ENCODE measurements at regions of chr1 and their contacts with region 1.

Region 1: DNA sequence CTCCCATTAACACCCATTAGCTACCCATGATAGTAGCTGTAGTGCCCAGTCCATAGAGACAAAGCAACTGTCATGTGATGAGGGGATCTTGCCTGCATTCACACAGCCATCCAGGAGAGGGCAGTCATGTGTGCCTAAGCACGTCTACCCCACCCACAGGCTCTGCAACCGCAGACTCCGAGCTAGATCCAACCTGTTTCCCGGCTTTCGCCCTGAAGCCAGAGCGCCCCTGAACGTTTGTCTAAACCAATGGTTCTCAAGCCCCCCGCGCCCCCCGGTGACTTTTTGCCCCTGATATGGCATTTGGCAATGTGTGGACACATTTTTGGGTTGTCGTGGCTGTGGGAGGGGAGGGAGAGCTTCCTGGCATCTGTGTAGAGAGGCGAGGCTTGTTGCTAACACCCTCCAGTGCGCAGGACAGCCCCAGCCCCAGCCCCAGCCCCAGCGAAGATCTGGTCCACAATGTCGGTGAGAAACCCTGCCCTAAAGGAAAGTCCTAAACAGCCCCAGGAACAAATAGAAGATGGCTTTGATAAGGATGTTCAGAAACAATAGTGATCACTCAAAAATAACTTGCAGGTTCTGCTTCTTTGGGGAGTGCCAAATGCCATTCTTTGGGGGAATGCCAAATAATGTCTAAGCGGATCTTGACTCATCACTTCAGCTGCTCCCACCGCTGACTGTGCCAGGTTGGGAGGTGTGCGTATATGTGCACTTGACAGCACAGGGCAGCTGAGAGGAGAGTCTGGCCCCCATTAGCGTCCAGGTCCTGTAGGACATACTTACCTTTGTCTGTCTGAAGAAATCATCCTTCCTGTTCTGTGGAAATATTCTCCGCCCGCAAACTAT is 34.5 kb downstream of the SLC44A3 start:
- DNase-seq: peak; percentile 86 to 99
- H3K4me3 ChIP-seq: peak overlapping the region; percentile 38; the same call in 1 of the 2 replicates
- H3K27ac ChIP-seq: peak overlapping the region; percentile 83
- H3K4me1 ChIP-seq: peaks cover 65% of the 10 kb centered on the region
- H3K27me3 ChIP-seq: no peaks in the 10 kb centered on the region
- CTCF ChIP-seq: peak; percentile 99

Region 2: GRCh38 chr1:94522304-94522703 is 332.4 kb before region 1 on chr1:
- CTCF ChIA-PET with region 1: no interaction called
- POLR2A ChIA-PET with region 1: no interaction called
- intact Hi-C with region 1: loop called (anchors 5 kb)
- DNase-seq: no peak
- H3K4me3 ChIP-seq: no peak overlapping the region
- H3K27ac ChIP-seq: no peak overlapping the region
- H3K4me1 ChIP-seq: peaks cover 12% of the 10 kb centered on the region
- H3K27me3 ChIP-seq: no peaks in the 10 kb centered on the region
- CTCF ChIP-seq: peak; percentile 63

Region 3: GRCh38 chr1:94807742-94808491 is 46.8 kb before region 1 on chr1:
- CTCF ChIA-PET with region 1: no interaction called
- POLR2A ChIA-PET with region 1: no interaction called
- intact Hi-C with region 1: loop called (anchors 2 kb)
- DNase-seq: peak; percentile 70 to 89
- H3K4me3 ChIP-seq: no peak overlapping the region
- H3K27ac ChIP-seq: 0 out of 2 replicates have a peak overlapping the region, but pooled peaks have one; percentile 16
- H3K4me1 ChIP-seq: peaks cover 16% of the 10 kb centered on the region
- H3K27me3 ChIP-seq: no peaks in the 10 kb centered on the region
- CTCF ChIP-seq: no peak

Region 4: DNA sequence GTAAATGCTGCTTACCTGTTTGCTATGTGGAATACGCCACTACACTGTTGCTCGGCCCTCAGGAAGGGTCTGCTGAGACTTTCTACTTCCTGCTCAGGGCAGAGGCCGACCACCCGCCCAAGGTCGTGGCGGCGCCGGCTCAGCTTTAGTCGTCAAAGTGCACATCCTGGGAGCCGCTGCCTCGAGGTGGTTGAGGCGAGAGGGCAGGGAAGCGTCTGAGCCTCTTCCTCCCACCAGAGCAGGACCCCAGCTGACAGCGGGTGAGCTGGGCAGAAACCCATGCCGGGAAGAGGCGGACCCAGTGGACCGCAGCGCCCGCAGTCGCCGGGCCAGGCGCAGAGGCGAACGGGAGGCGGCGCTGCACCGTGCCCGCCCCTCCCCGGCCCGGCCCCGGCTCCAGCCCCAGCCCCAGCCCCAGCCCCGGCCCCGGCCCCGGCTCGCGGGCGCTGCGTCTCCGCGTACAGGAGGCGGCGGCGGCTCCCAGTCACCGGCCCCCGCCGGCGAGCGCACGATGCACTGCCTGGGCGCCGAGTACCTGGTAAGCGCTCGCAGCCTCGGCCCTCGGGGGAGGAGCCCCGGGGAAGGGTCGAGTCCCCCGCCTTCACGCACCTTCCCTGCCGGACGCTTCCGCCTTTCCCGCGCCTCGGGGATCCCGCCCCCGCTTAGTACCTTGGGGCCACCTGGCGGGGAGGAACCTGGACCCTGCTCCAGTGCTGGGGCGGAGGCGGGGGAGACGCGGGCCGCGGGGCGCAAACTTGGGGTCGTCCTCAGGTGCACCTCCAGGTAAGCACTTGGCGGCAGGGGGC is 34.5 kb before region 1 on chr1 and contains the start of gene SLC44A3:
- CTCF ChIA-PET with region 1: interaction called, 3 read pairs
- POLR2A ChIA-PET with region 1: no interaction called
- intact Hi-C with region 1: loop called (anchors 1 kb)
- DNase-seq: peak; percentile 64 to 65
- H3K4me3 ChIP-seq: peak within 1 kb of the TSS; percentile 96
- H3K27ac ChIP-seq: peak within 1 kb of the TSS; percentile 55
- H3K4me1 ChIP-seq: peaks cover 52% of the 10 kb centered on the region
- H3K27me3 ChIP-seq: no peaks in the 10 kb centered on the region
- CTCF ChIP-seq: no peak; the same call in 1 of the 2 replicates
- total RNA-seq, gene SLC44A3: 11.0 and 17.5 TPM in 2 replicates

Region 5: GRCh38 chr1:94887603-94888171 is 33.0 kb after region 1 on chr1:
- CTCF ChIA-PET with region 1: interaction called, 3 read pairs
- POLR2A ChIA-PET with region 1: no interaction called
- intact Hi-C with region 1: loop called (anchors 5 kb)
- DNase-seq: no peak
- H3K4me3 ChIP-seq: no peak overlapping the region
- H3K27ac ChIP-seq: no peak overlapping the region
- H3K4me1 ChIP-seq: 0 out of 2 replicates have a peak, but pooled peaks cover 3% of the 10 kb centered on the region
- H3K27me3 ChIP-seq: no peaks in the 10 kb centered on the region
- CTCF ChIP-seq: no peak

Region 6: DNA sequence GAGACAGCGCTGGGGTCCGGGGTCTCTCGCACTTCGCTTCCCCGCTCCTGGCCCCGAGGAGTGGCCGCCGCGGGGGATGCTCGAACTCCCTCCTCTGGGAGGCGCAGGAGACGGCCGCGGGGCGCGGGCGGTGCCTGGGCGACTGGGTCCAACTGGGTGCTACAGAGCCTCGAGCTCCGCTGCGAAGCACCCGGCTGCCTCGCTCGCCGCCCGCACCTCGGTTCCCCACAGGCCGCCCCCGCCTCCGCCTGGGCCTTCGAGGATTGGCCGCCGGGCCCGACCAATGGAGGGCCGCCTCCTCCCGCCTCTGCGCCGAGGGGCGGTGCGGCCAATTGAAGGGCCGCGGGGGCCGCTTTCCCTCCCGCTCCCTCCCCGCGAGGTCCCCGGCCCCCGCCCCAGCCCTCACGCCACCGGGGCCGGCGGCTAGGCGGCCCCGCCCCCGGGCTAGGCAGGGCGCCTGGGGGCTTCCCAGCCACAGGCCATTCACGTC is 72.3 kb after region 1 on chr1 and contains the start of gene CNN3:
- CTCF ChIA-PET with region 1: interaction called, 6 read pairs
- POLR2A ChIA-PET with region 1: interaction called, 5 read pairs
- intact Hi-C with region 1: loop called (anchors 1 kb)
- DNase-seq: peak; percentile 80 to 95
- H3K4me3 ChIP-seq: peak within 1 kb of the TSS; percentile 67
- H3K27ac ChIP-seq: peak within 1 kb of the TSS; percentile 64
- H3K4me1 ChIP-seq: peaks cover 67% of the 10 kb centered on the region
- H3K27me3 ChIP-seq: no peaks in the 10 kb centered on the region
- CTCF ChIP-seq: no peak
- total RNA-seq, gene CNN3: 125 and 135 TPM in 2 replicates

Region 7: GRCh38 chr1:94936861-94937620 is 82.4 kb after region 1 on chr1:
- CTCF ChIA-PET with region 1: no interaction called
- POLR2A ChIA-PET with region 1: interaction called, 13 read pairs
- intact Hi-C with region 1: no loop called
- DNase-seq: peak in 1 of 2 experiments; percentile 94
- H3K4me3 ChIP-seq: no peak overlapping the region
- H3K27ac ChIP-seq: peak overlapping the region; percentile 21; the same call in 1 of the 2 replicates
- H3K4me1 ChIP-seq: peaks cover 31% of the 10 kb centered on the region
- H3K27me3 ChIP-seq: no peaks in the 10 kb centered on the region
- CTCF ChIP-seq: no peak

Region 8: DNA sequence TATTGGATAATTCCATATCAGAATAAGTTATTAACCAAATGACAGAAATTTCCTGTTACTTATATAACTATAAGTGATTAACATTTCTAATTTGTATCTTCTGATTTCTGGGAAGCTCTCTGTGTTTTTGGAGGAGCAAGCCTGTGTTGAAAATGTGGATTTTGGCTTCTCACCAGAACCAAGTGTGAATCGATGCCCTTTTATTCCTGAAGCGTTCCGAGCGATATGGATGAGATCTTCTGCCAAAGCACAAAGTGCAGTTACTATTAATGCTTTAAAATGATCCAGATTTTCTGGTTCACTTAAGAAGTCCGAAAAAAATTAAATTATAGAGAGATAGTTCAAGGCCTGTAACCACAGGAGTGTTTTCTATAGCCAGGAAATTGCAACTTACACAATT is 195.3 kb after region 1 on chr1:
- CTCF ChIA-PET with region 1: no interaction called
- POLR2A ChIA-PET with region 1: no interaction called
- intact Hi-C with region 1: no loop called
- DNase-seq: no peak
- H3K4me3 ChIP-seq: no peak overlapping the region
- H3K27ac ChIP-seq: no peak overlapping the region
- H3K4me1 ChIP-seq: no peaks in the 10 kb centered on the region
- H3K27me3 ChIP-seq: no peaks in the 10 kb centered on the region
- CTCF ChIP-seq: no peak

Measured in PC-9 (cell line).